Kidney (tissue), 22 donors: ENCODE measurements at regions of chr4 and their contacts with region 1.

Region 1: DNA sequence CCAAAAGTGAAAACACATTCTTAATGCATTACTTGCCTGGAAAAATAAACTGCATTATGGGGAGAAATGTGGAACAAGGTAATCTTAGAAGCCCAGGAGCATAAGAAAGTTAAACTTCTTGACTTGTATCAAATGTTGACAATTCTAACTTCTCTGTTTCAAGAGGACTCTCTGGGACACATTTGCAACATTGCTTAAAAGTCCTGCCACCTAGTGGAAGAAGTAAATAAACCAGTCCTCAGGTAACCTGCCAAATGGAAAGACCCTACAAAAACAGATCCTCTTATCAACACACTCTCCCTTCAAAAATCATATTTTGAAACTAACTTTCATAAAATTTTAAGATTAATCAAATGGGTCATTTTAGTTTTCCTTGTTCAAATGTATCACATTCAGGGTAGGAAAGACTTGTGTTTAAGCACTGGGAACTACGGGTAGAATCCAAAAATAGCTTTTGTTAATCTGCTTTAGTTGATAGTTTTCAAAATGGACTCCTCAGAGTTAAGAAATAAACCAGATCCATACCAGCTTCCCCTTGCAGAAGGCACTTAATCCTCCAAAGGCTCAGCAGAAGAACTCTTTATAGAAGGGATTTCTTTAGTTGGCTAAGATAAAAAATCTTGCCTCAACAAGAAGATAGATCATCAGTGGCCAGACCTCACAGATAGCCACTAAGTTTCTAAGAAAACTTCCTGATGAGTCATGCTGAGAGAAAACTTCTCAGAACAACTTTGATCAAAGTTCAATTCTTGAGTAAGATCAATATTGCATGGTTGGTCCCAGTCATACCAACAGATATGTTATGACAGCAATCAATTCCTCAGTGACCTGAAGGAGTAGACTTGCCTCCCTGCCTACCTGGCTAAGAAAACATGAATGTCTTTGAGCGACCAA is 141.7 kb downstream of the HHIP start:
- DNase-seq: peak in 2 of 5 donors; percentile 71 to 75
- H3K4me3 ChIP-seq: no peak overlapping the region
- H3K27ac ChIP-seq: no peak overlapping the region
- H3K4me1 ChIP-seq: no peaks in the 10 kb centered on the region
- H3K27me3 ChIP-seq: no peaks in the 10 kb centered on the region
- CTCF ChIP-seq: peak; percentile 31

Region 2: DNA sequence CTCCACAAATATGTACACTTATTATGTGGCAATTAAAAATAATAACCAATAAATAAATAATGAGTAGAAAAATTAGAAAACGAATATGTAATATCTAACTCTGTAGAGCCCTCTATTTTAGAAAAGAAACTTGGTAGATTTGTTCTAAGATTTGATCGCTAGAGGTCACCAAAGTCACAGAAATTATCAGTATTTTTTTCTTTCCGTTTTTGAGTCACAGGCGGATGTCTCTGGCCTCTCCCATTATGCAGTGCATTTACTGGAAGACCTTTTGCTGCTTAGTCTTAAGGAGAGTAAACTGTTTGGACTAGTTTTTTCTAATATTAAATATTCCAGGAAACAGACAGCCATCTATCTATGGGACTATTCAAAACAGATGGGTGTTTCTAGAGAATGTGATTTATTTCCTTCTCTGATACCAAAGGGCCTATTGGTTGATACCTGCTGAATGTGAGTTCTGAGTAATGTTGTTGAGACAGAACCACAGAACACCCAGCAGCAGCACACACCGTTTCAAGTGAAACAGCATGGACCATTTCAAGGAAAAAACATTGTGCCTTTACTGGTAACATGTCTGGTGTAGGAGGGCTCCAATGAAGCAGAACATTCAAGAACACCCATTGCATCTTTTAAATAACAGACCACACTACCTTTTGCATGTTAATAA is 613.1 kb before region 1 on chr4:
- intact Hi-C with region 1: loop called (anchors 10 kb)
- DNase-seq: peak in 2 of 5 donors; percentile 79 to 84
- H3K4me3 ChIP-seq: no peak overlapping the region
- H3K27ac ChIP-seq: no peak overlapping the region
- H3K4me1 ChIP-seq: no peaks in the 10 kb centered on the region
- H3K27me3 ChIP-seq: no peaks in the 10 kb centered on the region
- CTCF ChIP-seq: peak; percentile 45

Region 3: DNA sequence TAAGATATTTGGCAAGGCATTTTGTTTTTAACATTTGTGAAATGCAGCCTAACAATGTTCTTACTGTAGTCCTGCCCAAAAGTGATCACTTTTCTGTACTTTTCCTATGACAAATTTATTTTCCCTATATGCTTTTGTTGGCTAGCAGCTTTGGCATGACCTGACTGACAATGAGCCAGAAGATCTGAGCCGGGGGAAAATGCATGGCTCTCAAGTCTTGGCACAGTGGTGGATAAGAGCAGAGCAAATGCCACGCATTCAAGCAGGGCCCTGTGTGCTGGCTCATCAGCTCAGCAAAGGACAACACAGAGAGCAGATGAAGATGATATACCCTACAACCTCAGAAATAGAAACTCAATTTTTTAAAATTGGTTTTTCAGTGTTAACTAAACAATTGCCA is 123.1 kb after region 1 on chr4:
- intact Hi-C with region 1: no loop called
- DNase-seq: no peak
- H3K4me3 ChIP-seq: no peak overlapping the region
- H3K27ac ChIP-seq: no peak overlapping the region
- H3K4me1 ChIP-seq: no peaks in the 10 kb centered on the region
- H3K27me3 ChIP-seq: no peaks in the 10 kb centered on the region
- CTCF ChIP-seq: no peak